Cardiac septum (tissue), 1 donor: ENCODE measurements at regions of chr4 and their contacts with region 1.

Region 1: GRCh38 chr4:143558823-143559756 is 45.6 kb downstream of the SMARCA5 start:
- DNase-seq: no peak

Region 2: GRCh38 chr4:143513306-143514168 is 45.6 kb before region 1 on chr4 and contains the start of gene SMARCA5:
- intact Hi-C with region 1: loop called (anchors 5 kb)
- DNase-seq: peak; percentile 98
- total RNA-seq, gene SMARCA5: 37.7 TPM

Region 3: DNA sequence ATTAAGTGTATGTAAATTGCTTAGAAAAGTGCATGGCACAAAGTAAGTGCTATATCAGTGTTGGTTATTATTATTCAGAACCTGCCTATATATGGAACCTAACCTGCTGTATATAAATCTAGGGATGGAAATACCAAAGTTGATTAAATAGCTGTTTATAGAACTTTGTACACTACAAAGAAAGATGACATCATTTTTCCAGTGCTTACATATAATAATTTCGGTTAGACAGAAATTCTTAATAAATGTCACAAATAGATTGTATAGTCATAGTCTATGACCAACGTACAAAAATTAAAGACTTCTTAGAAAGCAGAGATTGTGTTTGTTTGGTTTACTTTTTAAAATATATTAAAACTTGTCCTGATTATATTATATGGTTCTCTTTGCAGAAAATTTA is 455.7 kb after region 1 on chr4:
- intact Hi-C with region 1: loop called (anchors 2 kb)
- DNase-seq: no peak